Activated CD4-positive, alpha-beta memory T cell treated with anti-CD3 and anti-CD28 coated beads for 36 hours (primary cell): ENCODE measurements at regions of chr6 and their contacts with region 1.

Region 1: DNA sequence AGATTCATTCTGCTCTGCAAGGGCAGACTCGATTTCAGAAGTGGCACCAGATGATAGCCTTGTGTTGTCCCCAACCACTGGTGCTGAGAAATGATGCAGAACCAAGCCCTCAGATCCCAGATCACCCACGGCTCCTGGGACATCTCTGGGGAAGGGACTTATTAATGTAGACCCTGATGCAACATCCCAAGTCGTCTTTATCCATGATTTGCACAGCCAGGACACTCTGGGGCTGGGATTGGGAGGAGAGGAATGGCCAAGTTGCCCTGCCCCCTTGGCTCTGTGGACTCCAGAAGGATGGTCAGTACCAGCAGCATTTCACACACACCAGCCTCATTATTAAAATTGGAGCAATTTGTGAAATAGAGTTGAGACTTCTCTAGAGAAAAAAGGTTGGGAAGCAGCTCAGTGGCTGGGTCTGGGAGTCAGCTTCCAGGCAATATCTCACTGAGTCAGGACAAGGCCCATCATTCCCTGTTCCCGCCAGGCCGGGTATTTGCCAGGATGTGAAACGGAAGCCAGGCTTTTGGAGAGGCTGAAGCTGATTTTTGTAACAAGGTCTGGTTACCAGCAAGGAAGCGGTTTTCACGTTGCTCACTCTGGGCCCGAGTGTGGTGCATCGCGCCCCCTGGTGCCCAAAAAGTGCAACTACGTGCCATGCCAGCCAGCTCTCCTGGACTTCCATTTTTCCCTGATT is 67.4 kb downstream of the ZBTB2 start:
- DNase-seq: peak; percentile 82
- H3K4me3 Mint-ChIP-seq: peak overlapping the region; percentile 24
- H3K27ac Mint-ChIP-seq: no peak overlapping the region
- H3K4me1 Mint-ChIP-seq: peaks cover 26% of the 10 kb centered on the region
- H3K27me3 Mint-ChIP-seq: peaks cover 44% of the 10 kb centered on the region

Region 2: DNA sequence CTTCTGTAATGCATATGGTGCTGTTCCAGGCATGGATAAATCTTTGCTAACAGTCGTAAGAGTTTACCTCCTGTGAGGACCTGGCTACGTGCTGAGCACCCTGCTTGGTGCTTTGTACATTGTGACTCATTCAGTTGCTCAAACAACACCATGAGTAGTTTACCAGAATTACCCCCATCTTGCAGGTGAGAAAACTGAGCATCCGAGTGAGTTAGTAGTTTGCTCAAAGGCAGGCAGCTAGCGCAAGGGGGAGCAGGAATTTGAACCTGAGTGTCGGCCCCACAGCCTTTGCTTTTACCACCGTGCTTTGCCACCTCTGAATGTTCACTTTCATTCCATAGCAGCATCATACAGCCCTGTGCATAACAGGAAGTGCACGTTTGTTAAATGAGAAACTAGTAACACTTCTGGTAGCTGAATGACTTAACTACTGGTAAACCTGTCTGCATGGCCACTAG is 336.5 kb before region 1 on chr6:
- CTCF ChIA-PET with region 1: interaction called, 11 read pairs
- POLR2A ChIA-PET with region 1: no interaction called
- intact Hi-C with region 1: no loop called
- DNase-seq: peak; percentile 83
- H3K4me3 Mint-ChIP-seq: peak overlapping the region; percentile 55
- H3K27ac Mint-ChIP-seq: peak overlapping the region; percentile 96
- H3K4me1 Mint-ChIP-seq: peaks cover 13% of the 10 kb centered on the region
- H3K27me3 Mint-ChIP-seq: no peaks in the 10 kb centered on the region

Region 3: DNA sequence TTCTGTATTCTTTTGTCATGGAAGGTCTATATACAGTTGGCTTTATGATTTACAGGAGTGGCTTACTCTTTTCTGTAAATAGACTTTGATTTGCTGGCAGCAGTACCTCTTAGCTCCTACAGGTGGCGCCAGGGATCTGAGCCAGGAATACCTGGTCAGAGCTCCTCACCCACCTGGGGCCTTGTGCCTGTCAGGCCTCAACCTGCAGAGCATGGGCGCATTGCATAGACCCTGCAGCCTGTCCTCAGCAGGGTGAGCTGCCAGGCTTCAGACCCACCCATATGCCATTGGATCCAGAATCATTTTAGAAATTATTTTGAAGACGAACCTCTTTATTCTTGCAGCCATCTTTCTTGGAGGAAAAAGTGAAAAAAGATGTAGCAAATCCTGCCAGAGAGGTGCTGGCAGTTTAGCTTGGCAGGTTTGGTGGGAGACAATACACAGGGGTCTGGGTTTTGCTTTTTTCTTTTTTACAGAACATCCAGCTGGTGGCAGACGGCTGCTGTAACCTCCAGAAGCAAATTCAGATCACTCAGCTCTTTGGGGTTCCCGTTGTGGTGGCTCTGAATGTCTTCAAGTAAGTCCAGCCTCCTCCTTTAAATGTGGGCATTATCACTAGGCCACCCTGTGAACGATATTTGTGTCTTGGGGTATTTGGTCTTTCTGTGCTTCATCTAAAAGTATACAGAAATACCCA is 309.4 kb before region 1 on chr6:
- CTCF ChIA-PET with region 1: interaction called, 269 read pairs
- POLR2A ChIA-PET with region 1: interaction called, 8 read pairs
- intact Hi-C with region 1: loop called (anchors 1 kb)
- DNase-seq: peak; percentile 69
- H3K4me3 Mint-ChIP-seq: no peak overlapping the region
- H3K27ac Mint-ChIP-seq: no peak overlapping the region
- H3K4me1 Mint-ChIP-seq: peaks cover 1% of the 10 kb centered on the region
- H3K27me3 Mint-ChIP-seq: no peaks in the 10 kb centered on the region

Region 4: DNA sequence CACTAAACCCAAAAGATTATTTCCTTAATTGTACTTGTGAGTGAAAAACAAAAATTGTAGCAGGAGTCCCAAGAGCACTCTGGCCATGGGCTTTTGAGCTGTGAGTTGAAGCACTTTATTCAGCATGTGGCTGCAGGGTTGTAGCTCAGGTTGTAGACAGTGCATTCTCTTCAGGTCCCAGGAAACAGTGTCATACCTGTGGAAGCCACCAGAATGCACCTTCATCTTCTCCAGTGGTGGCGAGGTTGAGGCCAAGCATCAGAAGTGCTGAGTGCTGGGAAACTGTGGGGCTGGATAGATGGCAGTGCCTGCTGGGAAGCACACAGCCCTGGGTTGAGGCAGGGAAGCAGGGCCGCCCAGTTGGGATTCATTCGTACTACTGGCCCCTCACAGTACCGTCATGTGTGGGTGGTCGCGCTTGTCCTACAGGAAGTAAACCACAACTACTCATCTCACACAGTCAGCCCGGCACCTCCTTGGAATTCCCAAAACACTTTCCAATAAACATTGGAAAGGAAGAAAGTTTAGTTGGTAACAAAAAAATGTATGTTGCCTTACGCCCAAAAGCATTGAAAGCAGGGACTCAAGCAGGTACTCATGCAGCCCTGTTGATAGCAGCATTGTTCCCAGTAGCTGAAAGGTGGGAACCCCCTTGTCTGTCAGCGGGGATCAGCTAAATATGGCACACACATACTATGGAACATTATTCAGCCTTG is 296.0 kb before region 1 on chr6:
- CTCF ChIA-PET with region 1: interaction called, 13 read pairs
- POLR2A ChIA-PET with region 1: no interaction called
- intact Hi-C with region 1: no loop called
- DNase-seq: no peak
- H3K4me3 Mint-ChIP-seq: no peak overlapping the region
- H3K27ac Mint-ChIP-seq: no peak overlapping the region
- H3K4me1 Mint-ChIP-seq: peaks cover 3% of the 10 kb centered on the region
- H3K27me3 Mint-ChIP-seq: no peaks in the 10 kb centered on the region

Region 5: DNA sequence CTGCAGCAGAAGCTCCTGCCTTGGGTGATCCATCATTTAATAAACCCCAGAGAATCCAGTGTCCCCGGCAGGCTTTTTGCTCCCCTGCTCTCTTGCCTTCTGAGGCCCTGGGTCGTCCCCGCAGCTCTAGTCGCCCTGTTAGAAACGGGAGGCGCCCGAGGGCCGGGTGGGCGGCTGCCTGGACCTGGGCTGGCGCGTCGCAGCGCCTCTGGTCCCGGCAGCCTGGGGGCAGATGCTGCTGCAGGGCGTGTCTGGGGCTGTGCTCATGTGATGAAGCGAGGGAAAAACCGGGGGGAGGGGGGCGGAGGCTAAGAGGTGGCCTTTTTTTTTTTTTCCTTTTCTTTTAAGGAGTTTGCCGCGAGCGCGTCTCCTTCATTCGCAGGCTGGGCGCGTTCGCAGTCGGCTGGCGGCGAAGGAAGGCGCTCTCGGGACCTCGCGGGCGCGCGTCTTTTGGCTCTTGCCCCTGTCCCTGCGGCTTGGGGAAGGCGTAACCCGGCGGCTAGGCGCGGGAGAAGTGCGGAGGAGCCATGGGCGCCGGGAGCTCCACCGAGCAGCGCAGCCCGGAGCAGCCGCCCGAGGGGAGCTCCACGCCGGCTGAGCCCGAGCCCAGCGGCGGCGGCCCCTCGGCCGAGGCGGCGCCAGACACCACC is 83.8 kb before region 1 on chr6:
- CTCF ChIA-PET with region 1: interaction called, 7 read pairs
- POLR2A ChIA-PET with region 1: no interaction called
- intact Hi-C with region 1: loop called (anchors 10 kb)
- DNase-seq: peak; percentile 71
- H3K4me3 Mint-ChIP-seq: peak overlapping the region; percentile 80
- H3K27ac Mint-ChIP-seq: no peak overlapping the region
- H3K4me1 Mint-ChIP-seq: peaks cover 13% of the 10 kb centered on the region
- H3K27me3 Mint-ChIP-seq: peaks cover 59% of the 10 kb centered on the region

Region 6: DNA sequence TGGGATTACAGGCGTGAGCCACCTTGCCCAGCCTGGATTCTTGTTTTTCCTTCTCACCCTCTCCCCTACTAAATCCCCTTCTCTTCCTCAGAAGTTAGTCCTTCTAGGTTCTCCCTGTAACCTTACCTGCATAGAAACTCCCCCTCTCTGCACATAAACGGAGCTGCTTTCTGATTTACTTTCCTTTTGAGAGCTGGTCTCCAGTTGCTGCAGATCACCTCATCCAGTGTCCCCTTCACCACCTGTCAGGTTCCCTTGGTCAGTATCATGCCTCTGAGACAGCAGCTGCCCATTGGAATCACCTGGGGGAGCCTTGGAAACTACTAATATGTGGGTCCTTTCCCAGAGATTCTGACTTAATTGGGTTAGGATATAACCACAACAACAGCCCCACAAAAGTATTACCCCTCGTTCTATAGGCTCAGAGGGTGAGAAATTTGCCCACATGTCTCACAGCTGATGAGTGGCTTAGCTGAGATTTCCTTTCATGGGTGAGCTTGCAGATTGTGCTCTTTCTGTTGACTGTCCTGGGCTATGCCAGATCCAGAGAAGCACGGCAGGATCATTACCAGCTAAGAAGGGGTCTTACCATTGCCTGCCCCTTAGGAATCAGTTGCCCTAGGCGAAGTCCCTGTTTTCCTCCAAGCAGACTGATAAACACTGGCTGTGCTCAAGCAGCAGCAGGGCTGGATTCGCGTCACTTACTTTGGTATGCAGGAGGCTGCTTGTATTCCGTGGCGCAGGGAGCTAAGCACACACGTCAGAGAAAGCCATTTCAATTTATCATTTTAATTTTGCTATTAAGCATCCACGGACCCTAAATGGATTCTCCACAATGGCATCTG is 32.8 kb before region 1 on chr6:
- CTCF ChIA-PET with region 1: interaction called, 10 read pairs
- POLR2A ChIA-PET with region 1: no interaction called
- intact Hi-C with region 1: no loop called
- DNase-seq: no peak
- H3K4me3 Mint-ChIP-seq: no peak overlapping the region
- H3K27ac Mint-ChIP-seq: no peak overlapping the region
- H3K4me1 Mint-ChIP-seq: peaks cover 26% of the 10 kb centered on the region
- H3K27me3 Mint-ChIP-seq: peaks cover 35% of the 10 kb centered on the region

Region 7: GRCh38 chr6:151339369-151339768 is 15.4 kb after region 1 on chr6:
- CTCF ChIA-PET with region 1: interaction called, 49 read pairs
- POLR2A ChIA-PET with region 1: no interaction called
- intact Hi-C with region 1: no loop called
- DNase-seq: no peak
- H3K4me3 Mint-ChIP-seq: no peak overlapping the region
- H3K27ac Mint-ChIP-seq: no peak overlapping the region
- H3K4me1 Mint-ChIP-seq: no peaks in the 10 kb centered on the region
- H3K27me3 Mint-ChIP-seq: no peaks in the 10 kb centered on the region

Region 8: GRCh38 chr6:151400454-151400853 is 76.5 kb after region 1 on chr6:
- CTCF ChIA-PET with region 1: no interaction called
- POLR2A ChIA-PET with region 1: no interaction called
- intact Hi-C with region 1: no loop called
- DNase-seq: no peak
- H3K4me3 Mint-ChIP-seq: no peak overlapping the region
- H3K27ac Mint-ChIP-seq: peak overlapping the region; percentile 38
- H3K4me1 Mint-ChIP-seq: peaks cover 58% of the 10 kb centered on the region
- H3K27me3 Mint-ChIP-seq: no peaks in the 10 kb centered on the region